ENCODE measurements at regions of chr4 and their contacts with region 1.

Region 1: DNA sequence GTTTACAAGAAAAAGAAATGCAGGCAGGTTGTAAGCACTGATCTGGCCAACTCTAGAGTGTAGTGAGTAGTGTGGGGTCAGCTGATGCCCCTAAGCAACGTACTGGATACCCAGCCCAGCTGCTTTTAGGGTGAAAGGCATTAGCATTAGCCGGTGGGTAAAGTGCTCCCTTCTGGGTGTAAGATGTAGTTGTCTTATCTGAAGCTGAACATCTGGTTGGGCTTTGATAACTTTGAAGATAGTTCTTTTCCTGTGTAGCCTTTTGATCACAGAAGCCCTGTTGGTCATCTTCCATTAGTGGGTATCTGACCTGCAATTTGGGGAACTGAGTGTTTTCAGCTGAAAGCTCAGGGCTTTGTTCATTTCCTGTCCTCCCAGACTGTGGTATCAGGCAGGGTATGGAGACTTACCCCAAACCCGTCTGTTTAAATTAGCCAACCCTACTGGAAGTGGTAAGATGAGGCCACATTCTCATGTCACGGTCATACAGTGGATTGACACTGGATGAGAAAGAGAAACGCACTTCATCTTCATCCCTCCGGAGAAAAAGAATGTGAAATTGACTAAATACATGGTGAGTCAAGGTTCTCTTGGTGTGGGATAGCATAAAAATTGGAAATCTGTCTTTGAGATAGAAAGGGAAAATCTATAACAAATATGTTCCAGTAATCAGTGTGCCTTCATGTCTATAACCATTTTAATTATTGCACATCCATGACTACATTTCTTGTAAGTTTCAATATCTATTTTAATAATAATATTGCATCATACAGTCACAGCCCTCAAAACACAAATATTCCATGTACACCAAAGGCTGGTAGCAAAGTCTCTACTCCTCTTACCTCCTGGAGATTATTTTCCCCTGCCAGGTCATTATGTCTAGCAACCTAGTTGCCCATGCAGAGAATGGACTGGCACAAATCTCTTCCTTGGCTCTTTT is 8.7 kb downstream of the RHOH start:
- DNase-seq: peak in 2 of 5 donors; percentile 30 to 47
- H3K4me3 ChIP-seq: peak overlapping the region; percentile 49
- H3K4me3 Mint-ChIP-seq: peak overlapping the region; percentile 90 to 100 (median 97)
- H3K27ac ChIP-seq: peak overlapping the region; percentile 72
- H3K27ac Mint-ChIP-seq: peak overlapping the region; percentile 84 to 100 (median 94)
- H3K4me1 ChIP-seq: peaks cover 66% of the 10 kb centered on the region
- H3K4me1 Mint-ChIP-seq: peaks cover 76 to 96% (median 80%) of the 10 kb centered on the region in 3 donors
- H3K27me3 ChIP-seq: no peaks in the 10 kb centered on the region
- H3K27me3 Mint-ChIP-seq: peaks cover 0 to 2% of the 10 kb centered on the region in 2 donors

Region 2: GRCh38 chr4:40193016-40193571 is 12.4 kb before region 1 on chr4:
- CTCF ChIA-PET with region 1: interaction called, 17 read pairs
- POLR2A ChIA-PET with region 1: interaction called, 26 read pairs
- DNase-seq: peak in 2 of 5 donors; percentile 66 to 75
- H3K4me3 ChIP-seq: peak overlapping the region; percentile 63
- H3K4me3 Mint-ChIP-seq: peak overlapping the region; percentile 73 to 98 (median 82)
- H3K27ac ChIP-seq: peak overlapping the region; percentile 22
- H3K27ac Mint-ChIP-seq: peak overlapping the region; percentile 93 to 100 (median 99)
- H3K4me1 ChIP-seq: peaks cover 51% of the 10 kb centered on the region
- H3K4me1 Mint-ChIP-seq: peaks cover 48 to 80% (median 62%) of the 10 kb centered on the region in 3 donors
- H3K27me3 ChIP-seq: no peaks in the 10 kb centered on the region
- H3K27me3 Mint-ChIP-seq: no peaks in the 10 kb centered on the region

Region 3: DNA sequence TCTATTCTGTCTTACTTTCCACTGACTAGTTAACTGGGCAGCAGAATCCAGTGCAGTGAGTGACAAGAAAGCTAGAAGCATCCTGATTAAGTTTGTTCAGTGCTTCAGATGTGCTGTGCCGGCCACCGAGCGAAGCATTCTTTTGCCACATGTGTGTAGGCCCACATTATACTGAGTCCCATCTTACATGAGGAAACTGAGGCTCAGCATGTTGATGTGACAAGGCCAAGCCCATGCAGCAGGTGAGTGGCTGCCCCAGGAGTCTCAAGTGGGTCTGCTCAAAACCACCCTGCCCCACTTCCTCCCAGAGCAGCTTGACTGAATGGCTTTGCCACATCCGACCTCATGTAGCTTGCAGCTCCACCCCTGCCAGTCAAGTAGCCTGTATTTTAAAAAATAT is 41.8 kb after region 1 on chr4:
- CTCF ChIA-PET with region 1: interaction called, 5 read pairs
- POLR2A ChIA-PET with region 1: interaction called, 10 read pairs
- DNase-seq: peak in 4 of 5 donors; percentile 41 to 87 (median 56)
- H3K4me3 ChIP-seq: no peak overlapping the region
- H3K4me3 Mint-ChIP-seq: peak overlapping the region; percentile 3 to 82 (median 67)
- H3K27ac ChIP-seq: no peak overlapping the region
- H3K27ac Mint-ChIP-seq: peak overlapping the region; percentile 40 to 97 (median 96)
- H3K4me1 ChIP-seq: peaks cover 81% of the 10 kb centered on the region
- H3K4me1 Mint-ChIP-seq: peaks cover 65 to 91% (median 80%) of the 10 kb centered on the region in 3 donors
- H3K27me3 ChIP-seq: no peaks in the 10 kb centered on the region
- H3K27me3 Mint-ChIP-seq: no peaks in the 10 kb centered on the region